ENCODE measurements at regions of chr20 and their contacts with region 1.

Region 1: GRCh38 chr20:1965520-1966351 is 28.1 kb downstream of the PDYN start:
- DNase-seq: peak; percentile 54 to 84 (median 70)
- ATAC-seq: peak; percentile 20 to 88 (median 74)
- H3K4me3 ChIP-seq: peak overlapping the region in 4 of 12 donors; percentile 9 to 33 (median 18)
- H3K27ac ChIP-seq: peak overlapping the region in 1 of 12 donors; percentile 70
- H3K4me1 ChIP-seq: peaks cover 0 to 26% (median 0%) of the 10 kb centered on the region in 12 donors
- H3K27me3 ChIP-seq: peaks cover 0 to 4% (median 0%) of the 10 kb centered on the region in 9 donors
- CTCF ChIP-seq: peak; percentile 79 to 96 (median 91)
- POLR2A ChIP-seq: no peak

Region 2: GRCh38 chr20:1802385-1803060 is 163.2 kb before region 1 on chr20:
- intact Hi-C with region 1: loop called in 1 of 10 experiments (anchors 5 kb)
- DNase-seq: peak; percentile 66 to 87 (median 74)
- ATAC-seq: peak; percentile 82 to 92 (median 86)
- H3K4me3 ChIP-seq: peak overlapping the region; percentile 47 to 82 (median 66)
- H3K27ac ChIP-seq: peak overlapping the region in 10 of 12 donors; percentile 66 to 90 (median 80)
- H3K4me1 ChIP-seq: peaks cover 0 to 39% (median 19%) of the 10 kb centered on the region in 12 donors
- H3K27me3 ChIP-seq: no peaks in the 10 kb centered on the region
- CTCF ChIP-seq: peak; percentile 43 to 79 (median 68)
- POLR2A ChIP-seq: no peak

Region 3: GRCh38 chr20:1900321-1900801 is 65.4 kb before region 1 on chr20:
- intact Hi-C with region 1: no loop called
- DNase-seq: peak; percentile 38 to 62 (median 49)
- ATAC-seq: peak; percentile 70 to 83 (median 82)
- H3K4me3 ChIP-seq: no peak overlapping the region
- H3K27ac ChIP-seq: peak overlapping the region in 7 of 12 donors; percentile 8 to 49 (median 41)
- H3K4me1 ChIP-seq: peaks cover 0 to 50% (median 28%) of the 10 kb centered on the region in 12 donors
- H3K27me3 ChIP-seq: no peaks in the 10 kb centered on the region
- CTCF ChIP-seq: peak in 11 of 12 donors; percentile 12 to 77 (median 48)
- POLR2A ChIP-seq: no peak

Region 4: GRCh38 chr20:2086177-2086979 is 120.6 kb after region 1 on chr20:
- intact Hi-C with region 1: loop called in 3 of 10 experiments (anchors 5 to 10 kb)
- DNase-seq: no peak
- ATAC-seq: peak; percentile 34 to 62 (median 54)
- H3K4me3 ChIP-seq: no peak overlapping the region
- H3K27ac ChIP-seq: no peak overlapping the region
- H3K4me1 ChIP-seq: peaks cover 0 to 3% (median 0%) of the 10 kb centered on the region in 12 donors
- H3K27me3 ChIP-seq: peaks cover 0 to 35% (median 3%) of the 10 kb centered on the region in 9 donors
- CTCF ChIP-seq: peak in 9 of 12 donors; percentile 17 to 47 (median 34)
- POLR2A ChIP-seq: no peak

Region 5: DNA sequence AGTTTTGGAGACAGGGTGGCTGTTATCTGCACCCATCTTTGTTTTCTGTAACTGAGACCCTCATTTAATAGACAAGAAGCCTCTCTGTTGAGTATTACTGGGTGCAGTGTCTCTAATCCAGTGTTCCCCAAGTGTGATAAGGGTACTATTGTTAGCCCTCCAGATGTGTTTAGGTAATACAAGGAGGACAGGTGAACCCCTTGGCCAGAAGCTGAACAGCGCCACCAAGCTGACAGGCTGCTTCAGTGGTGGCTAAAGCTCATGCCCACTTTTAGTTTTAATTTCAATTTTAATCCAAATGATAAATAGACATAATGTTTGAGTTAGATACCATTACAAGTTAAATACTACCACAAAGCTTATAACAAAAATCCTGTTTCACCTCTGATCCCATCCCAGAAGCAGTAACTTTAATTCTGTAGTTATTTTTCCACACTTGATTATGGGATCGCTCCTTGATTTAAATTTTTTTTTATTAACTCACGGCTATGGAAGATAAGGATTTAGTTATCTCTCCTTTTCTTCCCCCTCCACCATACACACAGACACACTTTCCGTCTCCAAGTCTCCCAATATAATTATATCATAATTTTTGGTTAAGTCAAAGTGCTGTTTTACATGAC is 127.5 kb after region 1 on chr20:
- intact Hi-C with region 1: loop called in 3 of 10 experiments (anchors 5 to 10 kb)
- DNase-seq: no peak
- ATAC-seq: no peak
- H3K4me3 ChIP-seq: no peak overlapping the region
- H3K27ac ChIP-seq: no peak overlapping the region
- H3K4me1 ChIP-seq: no peaks in the 10 kb centered on the region
- H3K27me3 ChIP-seq: peaks cover 0 to 54% (median 14%) of the 10 kb centered on the region in 9 donors
- CTCF ChIP-seq: peak in 9 of 12 donors; percentile 11 to 47 (median 28)
- POLR2A ChIP-seq: no peak

Region 6: GRCh38 chr20:2172305-2173175 is 206.8 kb after region 1 on chr20:
- intact Hi-C with region 1: loop called (anchors 1 to 5 kb)
- DNase-seq: peak; percentile 66 to 84 (median 71)
- ATAC-seq: peak; percentile 52 to 88 (median 82)
- H3K4me3 ChIP-seq: no peak overlapping the region
- H3K27ac ChIP-seq: no peak overlapping the region
- H3K4me1 ChIP-seq: peaks cover 0 to 15% (median 2%) of the 10 kb centered on the region in 12 donors
- H3K27me3 ChIP-seq: no peaks in the 10 kb centered on the region
- CTCF ChIP-seq: peak; percentile 78 to 96 (median 90)
- POLR2A ChIP-seq: no peak

Region 7: DNA sequence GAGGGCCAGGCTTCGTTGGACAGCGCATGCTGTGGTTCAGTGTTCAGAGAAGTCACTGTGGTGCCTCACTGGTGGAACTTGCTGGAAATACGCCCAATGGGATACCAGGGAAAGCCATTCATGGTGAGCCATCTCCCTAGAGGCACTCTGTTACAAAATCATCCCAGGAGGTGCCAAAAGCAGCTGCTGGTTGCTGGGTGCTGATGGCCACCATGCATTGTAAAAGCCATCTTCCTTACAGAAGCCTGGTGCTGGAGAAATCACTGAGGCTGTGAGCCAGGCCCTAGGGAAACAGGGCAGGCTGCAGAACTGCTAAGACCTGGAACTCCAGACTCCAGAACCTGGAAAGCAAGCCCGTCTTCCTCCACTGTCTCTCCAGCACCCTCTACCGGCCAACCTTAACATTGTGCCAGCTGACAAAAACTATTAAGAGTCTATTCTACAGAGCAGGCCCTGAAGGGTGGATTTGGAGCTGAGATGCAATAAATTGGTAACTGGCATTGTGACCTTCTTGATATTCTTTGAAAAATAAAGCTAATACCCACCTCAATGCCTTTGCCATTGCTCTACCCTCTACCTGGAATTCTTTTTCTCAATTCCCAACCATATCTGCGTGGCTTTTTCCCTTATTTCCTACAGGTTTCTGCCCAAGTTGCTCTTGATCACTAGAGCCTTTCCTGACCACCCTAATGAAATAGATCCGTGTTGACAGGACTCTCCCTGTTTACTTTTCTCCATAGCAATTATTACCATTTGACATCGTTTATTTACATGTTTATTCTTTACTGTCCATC is 486.4 kb after region 1 on chr20:
- intact Hi-C with region 1: loop called in 8 of 10 experiments (anchors 5 to 10 kb)
- DNase-seq: peak; percentile 63 to 70 (median 67)
- ATAC-seq: peak in 3 of 4 donors; percentile 65 to 82 (median 78)
- H3K4me3 ChIP-seq: no peak overlapping the region
- H3K27ac ChIP-seq: no peak overlapping the region
- H3K4me1 ChIP-seq: peaks cover 0 to 5% (median 0%) of the 10 kb centered on the region in 12 donors
- H3K27me3 ChIP-seq: no peaks in the 10 kb centered on the region
- CTCF ChIP-seq: peak; percentile 70 to 92 (median 80)
- POLR2A ChIP-seq: no peak